ENCODE measurements at regions of chr6 and their contacts with region 1.

Region 1: DNA sequence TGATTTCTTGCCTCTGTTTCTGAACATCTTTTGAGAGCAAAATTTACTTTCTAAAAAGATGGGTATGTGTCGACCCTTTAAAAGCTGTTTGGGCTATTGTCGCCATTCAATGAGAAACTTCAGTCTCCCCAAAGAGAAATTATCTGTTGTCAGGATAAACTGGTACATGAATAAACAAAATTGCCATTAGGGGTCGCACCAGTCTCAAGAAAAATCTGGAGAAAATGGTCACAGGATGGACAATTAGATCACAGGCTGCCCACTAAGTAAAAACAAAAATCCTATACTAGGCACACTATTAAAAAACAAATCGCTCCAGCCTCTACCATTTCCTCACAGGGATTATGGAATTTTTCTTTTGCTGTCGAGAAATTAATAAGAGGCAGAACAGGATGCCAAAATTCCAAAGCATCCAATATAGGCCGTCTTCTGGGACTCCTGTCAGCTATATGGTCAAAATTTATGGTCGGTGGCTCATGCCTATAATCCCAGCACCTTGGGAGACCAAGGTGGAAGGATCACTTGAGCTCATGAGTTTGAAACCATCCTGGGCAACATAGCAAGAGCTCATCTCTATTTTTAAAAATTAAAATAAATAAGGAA is 5.5 kb upstream of the HLA-E start:
- DNase-seq: peak; percentile 54
- H3K4me3 Mint-ChIP-seq: no peak overlapping the region
- H3K27ac Mint-ChIP-seq: no peak overlapping the region
- H3K4me1 Mint-ChIP-seq: peaks cover 44% of the 10 kb centered on the region
- H3K27me3 Mint-ChIP-seq: peaks cover 35% of the 10 kb centered on the region

Region 2: DNA sequence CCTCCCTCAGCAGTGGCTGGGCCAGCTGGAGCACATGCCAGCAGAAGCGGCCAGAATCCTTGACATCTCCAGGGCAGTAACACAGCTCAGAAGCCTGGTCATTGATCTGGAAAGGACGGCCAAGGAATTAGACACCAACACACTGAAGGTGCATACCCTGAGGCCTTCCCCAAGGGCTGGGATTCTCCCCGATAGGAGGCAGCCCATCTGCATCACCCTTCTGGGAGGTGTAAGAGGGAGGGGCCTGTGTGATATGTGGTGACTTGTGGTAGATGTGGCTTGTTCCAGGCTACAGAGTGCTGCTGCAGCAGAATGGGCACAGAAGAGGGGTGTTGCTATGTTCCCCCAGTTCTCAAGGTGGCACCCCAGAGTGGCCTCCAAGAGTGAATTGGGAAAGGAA is 336.7 kb before region 1 on chr6:
- CTCF ChIA-PET with region 1: no interaction called
- intact Hi-C with region 1: no loop called
- DNase-seq: peak; percentile 29
- H3K4me3 Mint-ChIP-seq: no peak overlapping the region
- H3K27ac Mint-ChIP-seq: no peak overlapping the region
- H3K4me1 Mint-ChIP-seq: no peaks in the 10 kb centered on the region
- H3K27me3 Mint-ChIP-seq: peaks cover 21% of the 10 kb centered on the region

Region 3: GRCh38 chr6:30533460-30534294 is 49.9 kb after region 1 on chr6:
- CTCF ChIA-PET with region 1: interaction called, 367 read pairs
- intact Hi-C with region 1: loop called (anchors 1 kb)
- DNase-seq: no peak
- H3K4me3 Mint-ChIP-seq: peak overlapping the region; percentile 27
- H3K27ac Mint-ChIP-seq: peak overlapping the region; percentile 93
- H3K4me1 Mint-ChIP-seq: peaks cover 49% of the 10 kb centered on the region
- H3K27me3 Mint-ChIP-seq: no peaks in the 10 kb centered on the region

Region 4: DNA sequence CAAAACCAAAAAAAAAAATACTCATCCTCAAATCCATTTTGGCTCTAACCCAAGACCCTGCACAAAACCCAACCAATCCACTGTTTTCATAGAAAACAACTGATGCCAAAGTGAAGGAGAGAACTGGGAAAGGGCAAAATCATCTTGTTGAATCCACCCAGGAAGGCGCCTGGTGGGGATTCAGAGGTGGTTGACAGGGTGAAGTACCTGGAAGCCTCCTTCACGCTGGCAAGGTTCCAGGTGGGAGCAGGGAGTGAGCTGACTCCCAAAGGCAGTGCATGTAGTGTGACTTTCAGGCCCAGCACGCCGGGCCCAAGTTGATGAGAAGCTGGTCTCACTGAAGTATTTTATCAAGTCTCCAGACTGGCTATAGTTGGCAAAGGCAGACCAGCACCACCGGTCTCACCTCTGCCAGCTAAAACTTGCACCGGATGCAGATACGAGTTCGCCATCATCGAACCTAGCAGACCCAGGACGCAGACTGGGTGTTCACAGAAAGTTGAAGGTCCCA is 116.7 kb after region 1 on chr6:
- CTCF ChIA-PET with region 1: interaction called, 134 read pairs
- intact Hi-C with region 1: loop called (anchors 1 kb)
- DNase-seq: no peak
- H3K4me3 Mint-ChIP-seq: no peak overlapping the region
- H3K27ac Mint-ChIP-seq: peak overlapping the region; percentile 37
- H3K4me1 Mint-ChIP-seq: peaks cover 9% of the 10 kb centered on the region
- H3K27me3 Mint-ChIP-seq: no peaks in the 10 kb centered on the region

Region 5: DNA sequence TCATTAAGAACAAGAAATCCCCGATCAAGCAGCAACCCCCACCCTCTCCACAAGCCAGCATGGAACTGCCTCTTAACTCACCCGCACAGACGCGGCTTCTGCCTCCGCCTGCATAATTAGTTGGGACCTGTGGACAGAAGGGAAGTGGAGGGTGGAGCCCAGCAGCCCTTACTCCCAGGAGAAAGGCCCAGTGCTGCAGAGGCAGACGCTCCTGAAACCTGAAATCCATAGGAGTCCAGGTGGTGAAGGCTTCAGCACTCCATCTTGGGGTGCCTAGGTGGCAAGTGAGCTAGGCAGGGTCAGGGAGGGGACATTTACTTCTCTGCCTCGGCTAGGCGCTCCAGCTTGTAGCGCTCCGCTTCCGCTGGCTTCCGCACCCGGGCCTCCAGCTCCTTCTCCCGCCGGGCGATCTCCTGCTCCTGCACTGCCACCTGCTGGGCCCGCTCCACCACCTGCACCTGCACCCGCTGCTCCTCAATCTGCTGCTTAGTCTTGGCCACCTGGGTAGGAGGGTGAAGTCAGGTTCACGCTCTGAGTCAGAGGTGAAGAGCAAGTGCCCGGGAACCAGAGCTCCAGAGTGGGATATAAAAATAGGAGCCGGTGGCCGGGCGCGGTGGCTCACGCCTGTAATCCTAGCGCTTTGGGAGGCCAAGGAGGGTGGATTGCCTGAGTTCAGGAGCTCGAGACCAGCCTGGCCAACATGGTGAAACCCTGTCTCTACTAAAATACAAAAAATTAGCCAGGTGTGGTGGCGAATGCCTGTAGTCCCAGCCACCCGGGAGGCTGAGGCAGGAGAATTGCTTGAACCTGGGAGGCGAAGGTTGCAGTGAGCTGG is 247.0 kb after region 1 on chr6:
- CTCF ChIA-PET with region 1: no interaction called
- intact Hi-C with region 1: loop called (anchors 2 kb)
- DNase-seq: peak; percentile 94
- H3K4me3 Mint-ChIP-seq: peak overlapping the region; percentile 29
- H3K27ac Mint-ChIP-seq: no peak overlapping the region
- H3K4me1 Mint-ChIP-seq: peaks cover 47% of the 10 kb centered on the region
- H3K27me3 Mint-ChIP-seq: no peaks in the 10 kb centered on the region

Region 6: DNA sequence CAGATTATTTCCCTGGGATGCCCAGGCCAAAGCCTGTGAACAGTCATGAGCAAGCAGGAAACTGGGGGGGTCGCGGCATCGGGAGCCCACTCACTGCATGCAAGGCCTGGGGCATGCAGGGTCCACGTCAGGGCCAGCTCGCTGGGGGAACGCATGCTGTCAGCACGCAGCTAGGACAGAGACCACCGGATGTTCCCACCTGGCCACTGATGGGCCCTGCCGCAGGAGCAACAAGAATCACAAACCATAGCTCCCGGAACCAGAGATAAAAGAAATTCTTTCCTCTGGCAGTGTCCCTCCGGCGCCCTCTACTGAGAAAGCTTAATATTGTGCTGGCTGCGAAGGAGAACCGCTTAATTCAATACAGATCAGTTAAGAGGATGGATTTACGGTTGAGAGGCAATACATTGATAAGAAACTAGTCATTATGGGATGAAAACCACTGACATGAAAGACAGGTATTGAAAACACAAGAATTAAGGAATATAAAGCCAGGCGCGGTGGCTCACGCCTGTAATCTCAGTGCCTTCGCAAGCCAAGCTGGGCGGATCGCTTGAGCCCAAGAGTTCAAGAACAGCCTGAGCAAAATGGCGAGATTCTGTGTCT is 596.0 kb after region 1 on chr6:
- CTCF ChIA-PET with region 1: interaction called, 4 read pairs
- intact Hi-C with region 1: loop called (anchors 2 kb)
- DNase-seq: peak; percentile 86
- H3K4me3 Mint-ChIP-seq: peak overlapping the region; percentile 32
- H3K27ac Mint-ChIP-seq: no peak overlapping the region
- H3K4me1 Mint-ChIP-seq: peaks cover 8% of the 10 kb centered on the region
- H3K27me3 Mint-ChIP-seq: no peaks in the 10 kb centered on the region